ENCODE measurements at regions of chr20 and their contacts with region 1.

Region 1: DNA sequence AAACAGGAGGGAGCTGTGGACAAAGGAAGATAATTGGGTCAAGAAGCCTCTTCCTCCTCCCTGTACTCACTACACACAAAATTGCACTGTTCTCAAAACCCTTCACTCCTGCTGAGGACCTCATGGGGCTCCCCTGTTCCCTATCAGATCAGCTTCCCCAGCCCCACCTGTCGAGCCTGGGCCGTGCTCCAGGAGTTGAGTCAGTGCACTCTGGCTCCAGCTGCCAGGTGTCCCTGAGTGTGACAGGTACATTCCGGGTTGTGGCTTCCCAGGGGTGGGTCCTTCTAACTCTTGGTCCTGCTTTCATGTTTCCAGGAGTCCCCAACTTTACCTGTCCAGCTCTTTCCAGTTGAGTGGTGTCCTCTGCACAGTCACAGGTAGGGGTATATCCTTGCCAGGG is 8.4 kb downstream of the RAB5IF start:
- DNase-seq: no peak
- H3K4me3 ChIP-seq: no peak overlapping the region
- H3K4me3 Mint-ChIP-seq: no peak overlapping the region
- H3K27ac Mint-ChIP-seq: no peak overlapping the region
- H3K4me1 ChIP-seq: no peaks in the 10 kb centered on the region
- H3K4me1 Mint-ChIP-seq: no peaks in the 10 kb centered on the region
- H3K27me3 ChIP-seq: no peaks in the 10 kb centered on the region
- H3K27me3 Mint-ChIP-seq: no peaks in the 10 kb centered on the region
- CTCF ChIP-seq: no peak

Region 2: GRCh38 chr20:36377352-36378326 is 236.3 kb before region 1 on chr20:
- CTCF ChIA-PET with region 1: no interaction called
- POLR2A ChIA-PET with region 1: no interaction called
- intact Hi-C with region 1: no loop called
- DNase-seq: no peak
- H3K4me3 ChIP-seq: no peak overlapping the region
- H3K4me3 Mint-ChIP-seq: no peak overlapping the region
- H3K27ac Mint-ChIP-seq: no peak overlapping the region
- H3K4me1 ChIP-seq: no peaks in the 10 kb centered on the region
- H3K4me1 Mint-ChIP-seq: no peaks in the 10 kb centered on the region
- H3K27me3 ChIP-seq: peaks cover 3% of the 10 kb centered on the region; the same call in 1 of the 2 replicates
- H3K27me3 Mint-ChIP-seq: peaks cover 39% of the 10 kb centered on the region
- CTCF ChIP-seq: no peak

Region 3: GRCh38 chr20:36728986-36729385 is 115.0 kb after region 1 on chr20:
- CTCF ChIA-PET with region 1: no interaction called
- POLR2A ChIA-PET with region 1: no interaction called
- intact Hi-C with region 1: loop called (anchors 1 kb)
- DNase-seq: peak in 1 of 2 experiments; percentile 42
- H3K4me3 ChIP-seq: no peak overlapping the region
- H3K4me3 Mint-ChIP-seq: no peak overlapping the region
- H3K27ac Mint-ChIP-seq: no peak overlapping the region
- H3K4me1 ChIP-seq: no peaks in the 10 kb centered on the region
- H3K4me1 Mint-ChIP-seq: peaks cover 5% of the 10 kb centered on the region
- H3K27me3 ChIP-seq: no peaks in the 10 kb centered on the region
- H3K27me3 Mint-ChIP-seq: no peaks in the 10 kb centered on the region
- CTCF ChIP-seq: peak in 1 of 2 experiments; percentile 55

Region 4: DNA sequence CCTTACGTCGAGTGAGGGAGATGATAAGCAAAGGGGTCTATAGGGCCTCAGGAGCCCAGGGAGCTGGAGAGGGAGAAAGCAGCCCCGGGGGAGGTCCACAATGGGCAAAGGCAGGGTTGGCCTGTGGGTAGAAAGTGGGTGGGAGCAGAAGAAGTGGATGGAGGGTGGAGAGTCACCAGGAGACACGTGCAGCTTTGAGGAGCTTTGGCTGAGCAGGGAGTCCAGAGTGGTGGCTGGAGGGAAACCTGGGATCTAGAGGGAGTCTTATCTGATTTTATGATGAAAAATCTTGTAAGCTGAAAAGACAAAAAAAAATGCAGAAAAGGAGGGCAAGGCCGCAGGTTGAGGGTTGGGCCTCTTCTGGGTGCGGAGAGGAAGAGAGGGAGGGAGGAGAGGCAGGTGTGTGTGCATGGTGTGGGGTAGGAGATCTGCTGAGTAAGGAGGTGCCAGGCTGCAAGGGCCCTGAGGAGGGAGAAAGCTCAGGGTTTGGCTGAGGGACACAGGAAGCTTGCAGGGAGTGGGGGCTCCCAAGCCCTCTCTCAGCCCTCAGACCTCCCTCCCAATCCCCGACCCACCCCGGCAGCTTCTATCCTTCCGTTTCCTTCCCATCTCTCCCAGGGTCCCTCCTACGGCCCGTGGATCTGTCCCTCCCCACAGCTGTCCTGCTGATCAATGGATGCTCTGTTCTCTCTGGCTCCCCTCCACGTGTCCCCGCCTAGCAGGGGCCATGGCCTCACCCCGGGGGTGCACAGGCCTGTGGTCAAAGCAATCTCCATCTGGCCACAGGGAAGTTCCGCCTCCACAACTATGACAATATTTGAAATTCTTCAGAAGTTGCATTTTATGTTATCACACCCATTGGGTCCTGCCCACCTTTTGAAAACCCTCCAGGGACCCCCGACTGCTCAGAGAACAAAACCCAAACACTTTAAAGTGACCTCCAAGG is 1672.9 kb after region 1 on chr20:
- CTCF ChIA-PET with region 1: no interaction called
- POLR2A ChIA-PET with region 1: no interaction called
- intact Hi-C with region 1: no loop called
- DNase-seq: peak in 1 of 2 experiments; percentile 38
- H3K4me3 ChIP-seq: no peak overlapping the region
- H3K4me3 Mint-ChIP-seq: no peak overlapping the region
- H3K27ac Mint-ChIP-seq: no peak overlapping the region
- H3K4me1 ChIP-seq: no peaks in the 10 kb centered on the region
- H3K4me1 Mint-ChIP-seq: no peaks in the 10 kb centered on the region
- H3K27me3 ChIP-seq: no peaks in the 10 kb centered on the region
- H3K27me3 Mint-ChIP-seq: peaks cover 16% of the 10 kb centered on the region
- CTCF ChIP-seq: no peak